Activated CD4-positive, alpha-beta T cell treated with anti-CD3 and anti-CD28 coated beads for 36 hours (primary cell): ENCODE measurements at regions of chr12 and their contacts with region 1.

Region 1: DNA sequence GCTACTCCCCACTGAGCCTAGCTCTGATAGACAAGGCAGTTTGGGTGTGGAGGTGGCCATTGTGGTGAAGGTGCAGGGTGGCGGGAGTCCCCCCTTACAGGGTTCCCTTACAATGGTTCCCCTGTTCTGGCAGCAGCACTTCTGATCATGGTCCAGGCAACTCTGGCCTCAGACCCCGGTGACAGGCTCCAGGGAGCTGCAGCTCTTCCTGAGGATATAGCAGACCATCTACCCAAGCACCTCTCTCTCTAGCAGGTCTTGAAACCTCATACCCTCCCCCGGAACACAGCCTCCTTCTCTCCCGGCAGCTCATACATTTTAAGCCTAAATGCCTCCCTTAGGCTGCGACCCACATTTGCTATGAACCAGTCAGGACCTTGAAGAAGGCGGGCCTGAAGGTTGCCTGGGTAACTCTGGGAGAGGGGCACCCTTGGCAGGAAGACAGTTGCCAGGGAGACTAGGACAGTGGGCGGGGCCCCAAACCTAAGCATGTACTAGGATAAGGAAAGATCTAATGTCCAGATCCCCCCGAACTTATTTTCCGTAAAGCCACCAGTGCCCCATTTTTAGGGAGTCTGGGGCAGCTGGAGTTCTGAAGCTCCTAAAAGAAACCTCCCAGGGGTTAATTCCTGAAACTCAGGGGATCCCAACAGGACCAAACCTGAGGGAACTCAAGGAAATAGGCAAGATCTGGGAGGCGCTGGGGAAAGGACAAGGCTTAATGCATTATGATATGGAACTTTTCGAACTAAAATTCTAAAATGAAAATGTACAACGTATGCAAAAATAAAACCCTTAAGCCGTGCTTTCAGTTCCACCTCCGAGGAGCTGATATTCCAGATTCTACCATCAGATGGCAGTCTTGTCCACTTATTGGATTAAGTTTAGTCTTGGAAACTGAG is 4.5 kb upstream of the GDF11 start:
- DNase-seq: peak; percentile 88
- ATAC-seq: peak; percentile 82
- H3K4me3 Mint-ChIP-seq: peak overlapping the region; percentile 68
- H3K27ac Mint-ChIP-seq: peak overlapping the region; percentile 76
- H3K4me1 Mint-ChIP-seq: peaks cover 23% of the 10 kb centered on the region
- H3K27me3 Mint-ChIP-seq: no peaks in the 10 kb centered on the region

Region 2: GRCh38 chr12:54324617-54325441 is 1413.5 kb before region 1 on chr12 and contains the start of gene COPZ1:
- CTCF ChIA-PET with region 1: no interaction called
- POLR2A ChIA-PET with region 1: no interaction called
- intact Hi-C with region 1: no loop called
- DNase-seq: peak; percentile 96
- ATAC-seq: peak; percentile 99
- H3K4me3 Mint-ChIP-seq: peak within 1 kb of the TSS; percentile 96
- H3K27ac Mint-ChIP-seq: peak within 1 kb of the TSS; percentile 92
- H3K4me1 Mint-ChIP-seq: peaks cover 36% of the 10 kb centered on the region
- H3K27me3 Mint-ChIP-seq: no peaks in the 10 kb centered on the region
- total RNA-seq, gene COPZ1: 95.2 to 98.7 TPM

Region 3: GRCh38 chr12:55659486-55660385 is 78.6 kb before region 1 on chr12:
- CTCF ChIA-PET with region 1: no interaction called
- POLR2A ChIA-PET with region 1: no interaction called
- intact Hi-C with region 1: loop called (anchors 1 to 2 kb)
- DNase-seq: peak; percentile 22
- ATAC-seq: peak; percentile 44
- H3K4me3 Mint-ChIP-seq: no peak overlapping the region
- H3K27ac Mint-ChIP-seq: no peak overlapping the region
- H3K4me1 Mint-ChIP-seq: no peaks in the 10 kb centered on the region
- H3K27me3 Mint-ChIP-seq: peaks cover 2% of the 10 kb centered on the region

Region 4: GRCh38 chr12:55789171-55789570 is 50.8 kb after region 1 on chr12:
- CTCF ChIA-PET with region 1: interaction called, 53 read pairs
- POLR2A ChIA-PET with region 1: no interaction called
- intact Hi-C with region 1: no loop called
- DNase-seq: no peak
- ATAC-seq: no peak
- H3K4me3 Mint-ChIP-seq: no peak overlapping the region
- H3K27ac Mint-ChIP-seq: no peak overlapping the region
- H3K4me1 Mint-ChIP-seq: no peaks in the 10 kb centered on the region
- H3K27me3 Mint-ChIP-seq: no peaks in the 10 kb centered on the region

Region 5: GRCh38 chr12:55926738-55927587 is 188.6 kb after region 1 on chr12:
- CTCF ChIA-PET with region 1: interaction called, 19 read pairs
- POLR2A ChIA-PET with region 1: interaction called, 3 read pairs
- intact Hi-C with region 1: loop called (anchors 2 kb)
- DNase-seq: peak; percentile 97
- ATAC-seq: peak; percentile 40
- H3K4me3 Mint-ChIP-seq: peak overlapping the region; percentile 100
- H3K27ac Mint-ChIP-seq: peak overlapping the region; percentile 95
- H3K4me1 Mint-ChIP-seq: peaks cover 48% of the 10 kb centered on the region
- H3K27me3 Mint-ChIP-seq: no peaks in the 10 kb centered on the region

Region 6: GRCh38 chr12:55973598-55974307 is 235.4 kb after region 1 on chr12 and contains the start of gene RAB5B:
- CTCF ChIA-PET with region 1: interaction called, 21 read pairs
- POLR2A ChIA-PET with region 1: interaction called, 13 read pairs
- intact Hi-C with region 1: loop called in 1 of 2 experiments (anchors 1 kb)
- DNase-seq: peak; percentile 98
- ATAC-seq: peak; percentile 93
- H3K4me3 Mint-ChIP-seq: no peak within 1 kb of the TSS
- H3K27ac Mint-ChIP-seq: no peak within 1 kb of the TSS
- H3K4me1 Mint-ChIP-seq: peaks cover 28% of the 10 kb centered on the region
- H3K27me3 Mint-ChIP-seq: no peaks in the 10 kb centered on the region
- total RNA-seq, gene RAB5B: 33.2 to 35.1 TPM

Region 7: DNA sequence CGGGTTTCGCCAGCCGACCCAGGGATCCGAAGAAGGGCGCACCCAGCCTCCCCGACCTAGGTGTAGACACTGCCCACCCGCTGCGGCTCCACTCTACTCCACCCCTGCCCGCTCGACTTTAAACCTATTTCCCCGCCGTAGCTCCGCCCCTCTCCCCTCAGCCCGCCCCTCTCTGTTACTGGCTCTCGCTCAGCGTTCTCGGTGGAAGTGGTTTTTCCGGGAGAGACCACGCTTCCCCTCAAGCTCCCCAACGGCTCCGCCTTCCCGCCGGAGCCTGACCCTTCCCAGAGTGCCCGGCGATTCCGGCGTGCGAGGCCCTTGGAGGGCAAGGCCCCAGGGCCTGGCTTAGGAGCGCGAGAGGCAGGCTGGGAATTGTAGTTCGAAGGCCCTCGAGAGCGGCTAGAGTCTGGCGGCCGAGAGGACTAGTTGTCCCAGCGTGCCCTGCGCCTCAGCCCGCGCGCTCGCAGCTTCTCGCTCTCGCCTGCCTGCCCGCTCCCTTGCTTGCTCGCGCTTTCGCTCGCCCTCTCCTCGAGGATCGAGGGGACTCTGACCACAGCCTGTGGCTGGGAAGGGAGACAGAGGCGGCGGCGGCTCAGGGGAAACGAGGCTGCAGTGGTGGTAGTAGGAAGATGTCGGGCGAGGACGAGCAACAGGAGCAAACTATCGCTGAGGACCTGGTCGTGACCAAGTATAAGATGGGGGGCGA is 365.9 kb after region 1 on chr12 and contains the start of gene PA2G4:
- CTCF ChIA-PET with region 1: interaction called, 13 read pairs
- POLR2A ChIA-PET with region 1: interaction called, 3 read pairs
- intact Hi-C with region 1: loop called in 1 of 2 experiments (anchors 2 kb)
- DNase-seq: peak; percentile 99
- ATAC-seq: peak; percentile 95
- H3K4me3 Mint-ChIP-seq: peak within 1 kb of the TSS; percentile 100
- H3K27ac Mint-ChIP-seq: peak within 1 kb of the TSS; percentile 100
- H3K4me1 Mint-ChIP-seq: peaks cover 43% of the 10 kb centered on the region
- H3K27me3 Mint-ChIP-seq: no peaks in the 10 kb centered on the region
- total RNA-seq, gene PA2G4: 446 to 695 TPM